Esophagus muscularis mucosa (tissue), 4 donors: ENCODE measurements at regions of chr11 and their contacts with region 1.

Region 1: DNA sequence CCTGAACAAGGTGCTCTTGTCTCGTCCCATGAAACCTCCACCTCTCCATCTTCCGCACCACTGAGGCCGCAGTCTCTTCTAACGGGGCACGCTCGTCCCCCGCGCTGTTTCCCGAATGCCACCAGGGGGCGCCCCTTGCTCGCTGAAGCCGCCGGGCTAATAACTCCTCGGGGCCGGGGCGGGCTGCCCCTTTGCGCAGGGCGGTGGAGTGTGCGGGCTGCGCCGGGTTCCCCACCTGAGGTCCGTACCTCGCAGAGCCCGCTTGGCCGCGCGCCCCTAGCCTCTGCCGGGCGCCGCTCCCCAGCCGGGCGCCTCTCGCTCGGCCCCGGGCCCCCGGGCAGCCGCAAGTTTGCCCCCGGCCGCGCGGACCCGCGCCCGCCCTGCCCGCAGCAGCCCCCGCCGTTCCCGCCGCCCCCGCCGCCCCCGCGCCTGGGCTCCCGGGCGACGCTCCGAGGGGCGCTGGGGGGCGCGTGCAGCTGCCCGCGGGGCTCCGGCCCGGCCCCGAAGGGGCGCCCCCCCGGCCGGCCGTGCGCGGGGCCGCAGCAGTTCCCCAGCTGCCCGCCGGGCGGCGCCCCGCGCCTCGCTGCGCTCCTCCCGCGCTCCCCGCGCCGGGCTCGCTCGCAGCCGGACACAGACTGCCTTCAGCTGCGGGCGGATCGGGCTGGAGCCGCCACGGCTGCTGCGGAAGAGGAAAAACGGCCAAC is at the start of gene GRIK4:
- DNase-seq: no peak
- H3K4me3 ChIP-seq: peak within 1 kb of the TSS; percentile 52 to 73 (median 54)
- H3K27ac ChIP-seq: no peak within 1 kb of the TSS
- H3K4me1 ChIP-seq: peaks cover 0 to 13% (median 10%) of the 10 kb centered on the region in 4 donors
- H3K27me3 ChIP-seq: peaks cover 0 to 72% (median 4%) of the 10 kb centered on the region in 4 donors
- CTCF ChIP-seq: peak; percentile 86 to 89 (median 89)
- EP300 ChIP-seq: no peak
- POLR2A ChIP-seq: no peak
- total RNA-seq, gene GRIK4: 0.13 to 0.83 (median 0.43) TPM

Region 2: DNA sequence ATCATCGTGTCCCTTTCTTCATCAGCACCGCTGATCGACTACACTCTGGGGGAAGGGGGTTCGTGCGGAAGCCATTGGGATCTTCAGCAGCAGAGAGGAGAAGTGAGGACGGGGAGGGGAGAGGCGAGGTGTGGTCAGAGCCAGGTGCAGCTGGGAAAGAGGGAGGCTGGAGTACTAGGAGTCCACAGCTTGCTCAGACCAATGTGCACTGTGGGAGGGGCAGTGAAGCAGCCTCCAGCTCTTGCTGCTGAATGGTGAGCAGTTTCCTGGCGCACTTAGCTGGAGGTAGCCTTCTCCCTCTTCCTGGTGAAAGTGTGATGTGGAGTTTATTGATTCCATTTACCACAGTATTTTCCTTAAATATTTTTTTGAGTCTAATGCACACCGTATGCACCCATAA is 683.3 kb before region 1 on chr11:
- intact Hi-C with region 1: no loop called
- DNase-seq: no peak
- H3K4me3 ChIP-seq: no peak overlapping the region
- H3K27ac ChIP-seq: no peak overlapping the region
- H3K4me1 ChIP-seq: peaks cover 0 to 8% (median 0%) of the 10 kb centered on the region in 4 donors
- H3K27me3 ChIP-seq: peaks cover 0 to 38% (median 0%) of the 10 kb centered on the region in 4 donors
- CTCF ChIP-seq: no peak
- EP300 ChIP-seq: no peak
- POLR2A ChIP-seq: no peak

Region 3: DNA sequence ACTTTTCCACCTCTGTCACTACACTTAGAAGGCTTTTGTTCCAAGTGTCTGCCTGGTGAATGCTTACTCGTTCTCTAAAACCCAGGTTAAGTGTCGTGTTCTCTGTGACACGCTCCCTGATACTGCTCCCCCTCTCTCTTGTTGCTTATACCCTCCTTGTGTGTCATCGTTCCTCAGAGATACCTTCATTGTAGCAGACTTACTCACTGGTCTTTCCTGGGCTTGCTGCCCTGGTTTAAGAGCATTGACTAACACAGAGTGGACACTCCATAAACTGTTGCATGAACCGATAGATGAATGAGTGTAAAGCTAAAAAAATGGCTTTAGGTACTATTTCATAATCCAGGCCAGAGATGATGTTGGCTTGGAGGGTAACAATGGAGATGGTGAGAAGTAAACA is 171.6 kb after region 1 on chr11:
- intact Hi-C with region 1: loop called (anchors 2 kb)
- DNase-seq: no peak
- H3K4me3 ChIP-seq: no peak overlapping the region
- H3K27ac ChIP-seq: no peak overlapping the region
- H3K4me1 ChIP-seq: peaks cover 0 to 4% (median 0%) of the 10 kb centered on the region in 4 donors
- H3K27me3 ChIP-seq: peaks cover 0 to 16% (median 4%) of the 10 kb centered on the region in 4 donors
- CTCF ChIP-seq: no peak
- EP300 ChIP-seq: no peak
- POLR2A ChIP-seq: no peak

Region 4: DNA sequence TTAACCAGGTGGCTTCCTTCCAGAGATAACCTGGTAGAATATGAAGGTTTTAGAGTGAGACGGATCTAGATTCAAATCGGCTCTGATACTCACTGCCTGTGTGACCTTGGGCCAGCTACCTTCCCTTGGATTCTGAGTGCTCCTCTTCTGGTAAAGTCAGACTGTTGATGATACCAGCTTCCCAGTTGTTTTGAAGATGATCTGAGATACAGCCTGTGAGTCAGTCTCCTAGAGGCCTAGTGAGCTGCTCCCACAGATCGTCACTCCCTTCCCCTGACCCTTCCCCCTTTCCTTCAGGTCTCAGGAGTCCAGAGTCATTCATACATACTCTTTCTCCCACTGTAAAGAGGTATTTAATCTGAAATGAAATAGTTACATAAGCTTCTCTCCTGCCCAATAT is 208.1 kb after region 1 on chr11:
- intact Hi-C with region 1: no loop called
- DNase-seq: no peak
- H3K4me3 ChIP-seq: no peak overlapping the region
- H3K27ac ChIP-seq: no peak overlapping the region
- H3K4me1 ChIP-seq: no peaks in the 10 kb centered on the region
- H3K27me3 ChIP-seq: peaks cover 0 to 47% (median 0%) of the 10 kb centered on the region in 4 donors
- CTCF ChIP-seq: no peak
- EP300 ChIP-seq: no peak
- POLR2A ChIP-seq: no peak

Region 5: DNA sequence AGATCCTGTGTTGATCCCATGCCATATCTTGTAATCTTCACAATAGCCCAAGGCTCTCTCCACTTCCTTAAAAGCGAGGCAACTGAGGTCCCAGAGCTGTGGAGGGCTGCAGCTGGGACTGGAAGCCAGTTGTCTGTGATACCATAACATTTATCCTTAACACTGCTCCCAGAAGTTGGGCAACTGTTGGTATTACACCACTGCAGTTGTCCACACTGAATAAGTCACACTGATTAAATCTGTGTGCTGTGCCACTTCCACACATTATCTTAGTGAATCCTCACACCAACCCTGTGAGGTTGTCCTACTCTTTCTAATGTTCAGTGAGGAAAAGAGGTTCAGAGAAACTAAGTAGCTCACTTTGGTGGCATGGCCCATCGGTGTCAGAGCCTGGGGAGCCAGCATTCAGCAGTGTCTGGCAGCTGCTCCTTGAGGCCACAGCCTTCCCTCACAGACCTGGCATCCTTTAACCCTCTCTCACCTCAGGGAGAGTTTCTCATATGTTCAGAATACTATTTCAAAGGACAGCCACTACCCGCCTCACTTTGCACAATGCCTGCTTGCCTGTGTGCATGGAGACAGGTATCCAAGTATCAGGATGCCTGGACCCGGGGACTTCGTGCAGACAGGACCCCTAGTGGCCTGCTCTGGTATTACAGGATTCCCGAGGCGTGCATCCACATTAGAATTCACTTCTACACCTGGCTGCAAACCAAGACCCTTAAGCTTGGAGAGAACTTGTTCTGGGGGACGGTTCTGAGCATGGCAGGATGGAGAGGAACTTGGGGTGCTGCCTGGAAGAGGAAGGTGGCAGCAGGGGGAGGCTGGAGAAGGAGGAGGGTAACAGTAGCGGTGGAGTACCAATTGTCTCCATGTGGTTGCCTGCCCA is 290.8 kb after region 1 on chr11:
- intact Hi-C with region 1: loop called (anchors 5 kb)
- DNase-seq: no peak
- H3K4me3 ChIP-seq: no peak overlapping the region
- H3K27ac ChIP-seq: no peak overlapping the region
- H3K4me1 ChIP-seq: no peaks in the 10 kb centered on the region
- H3K27me3 ChIP-seq: peaks cover 0 to 48% (median 0%) of the 10 kb centered on the region in 4 donors
- CTCF ChIP-seq: peak; percentile 69 to 94 (median 85)
- EP300 ChIP-seq: no peak
- POLR2A ChIP-seq: no peak

Region 6: DNA sequence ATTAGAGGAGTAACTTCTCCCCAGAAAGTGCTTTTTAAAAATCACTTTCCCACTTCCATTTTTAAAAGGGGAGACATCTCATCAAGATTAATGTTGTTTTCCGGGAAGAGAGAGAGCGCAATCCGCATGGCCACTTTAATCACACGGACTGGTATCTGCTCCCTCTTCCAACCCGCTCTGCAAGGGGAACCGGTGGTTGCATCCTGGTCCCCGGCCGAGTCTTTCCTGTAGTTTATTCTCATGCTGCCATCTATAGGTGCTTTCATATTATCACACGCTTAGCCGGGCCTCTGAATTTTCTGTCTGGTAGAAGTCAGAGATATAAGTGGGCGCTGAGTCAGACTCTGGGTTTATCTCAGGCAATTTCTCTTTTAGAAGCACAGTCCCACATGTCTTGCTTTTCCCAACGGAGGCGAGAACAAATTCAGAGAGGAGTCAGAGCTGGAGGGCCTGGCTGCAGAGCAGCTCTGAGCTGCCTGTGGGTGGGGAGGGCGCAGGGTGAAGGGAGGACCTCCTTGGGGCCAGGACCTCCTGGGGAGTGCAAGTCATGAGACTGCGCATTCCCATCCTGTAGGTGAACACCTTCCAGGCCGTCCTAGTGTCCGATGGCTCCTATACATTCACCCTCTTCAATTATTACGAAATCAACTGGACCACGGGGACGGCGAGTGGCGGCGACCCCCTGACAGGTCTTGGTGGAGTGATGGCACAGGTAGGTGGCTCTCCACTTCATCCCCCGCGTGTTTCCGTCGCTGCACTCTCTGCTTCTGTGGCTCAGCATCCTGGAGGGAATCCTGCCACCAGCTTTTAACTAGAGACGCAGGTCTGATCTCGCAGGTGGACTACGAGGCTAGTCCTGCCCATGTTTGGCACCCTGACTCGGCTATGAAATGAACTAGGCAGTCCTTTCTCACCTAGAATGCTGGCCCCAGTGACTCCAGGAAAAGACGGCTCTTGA is 601.5 kb after region 1 on chr11:
- intact Hi-C with region 1: loop called (anchors 5 kb)
- DNase-seq: no peak
- H3K4me3 ChIP-seq: no peak overlapping the region
- H3K27ac ChIP-seq: no peak overlapping the region
- H3K4me1 ChIP-seq: peaks cover 0 to 9% (median 0%) of the 10 kb centered on the region in 4 donors
- H3K27me3 ChIP-seq: peaks cover 0 to 5% (median 0%) of the 10 kb centered on the region in 4 donors
- CTCF ChIP-seq: peak; percentile 50 to 60 (median 57)
- EP300 ChIP-seq: no peak
- POLR2A ChIP-seq: no peak

Region 7: GRCh38 chr11:121194731-121195596 is 683.7 kb after region 1 on chr11:
- intact Hi-C with region 1: loop called (anchors 2 kb)
- DNase-seq: no peak
- H3K4me3 ChIP-seq: no peak overlapping the region
- H3K27ac ChIP-seq: no peak overlapping the region
- H3K4me1 ChIP-seq: peaks cover 0 to 6% (median 0%) of the 10 kb centered on the region in 4 donors
- H3K27me3 ChIP-seq: peaks cover 0 to 18% (median 0%) of the 10 kb centered on the region in 4 donors
- CTCF ChIP-seq: peak; percentile 69 to 83 (median 82)
- EP300 ChIP-seq: no peak
- POLR2A ChIP-seq: no peak